Heart right ventricle (tissue), 16 donors: ENCODE measurements at regions of chr12 and their contacts with region 1.

Region 1: GRCh38 chr12:14970473-14970872 is 2.4 kb upstream of the PDE6H start:
- DNase-seq: no peak
- ATAC-seq: no peak
- H3K4me3 ChIP-seq: no peak overlapping the region
- H3K27ac ChIP-seq: no peak overlapping the region
- H3K4me1 ChIP-seq: peaks cover 0 to 22% (median 0%) of the 10 kb centered on the region in 9 donors
- H3K27me3 ChIP-seq: no peaks in the 10 kb centered on the region
- CTCF ChIP-seq: no peak

Region 2: GRCh38 chr12:15875863-15876262 is 905.4 kb after region 1 on chr12:
- intact Hi-C with region 1: loop called in 1 of 10 experiments (anchors 10 kb)
- DNase-seq: no peak
- ATAC-seq: no peak
- H3K4me3 ChIP-seq: no peak overlapping the region
- H3K27ac ChIP-seq: no peak overlapping the region
- H3K4me1 ChIP-seq: no peaks in the 10 kb centered on the region
- H3K27me3 ChIP-seq: no peaks in the 10 kb centered on the region
- CTCF ChIP-seq: no peak